ENCODE measurements at regions of chr20 and their contacts with region 1.

Region 1: DNA sequence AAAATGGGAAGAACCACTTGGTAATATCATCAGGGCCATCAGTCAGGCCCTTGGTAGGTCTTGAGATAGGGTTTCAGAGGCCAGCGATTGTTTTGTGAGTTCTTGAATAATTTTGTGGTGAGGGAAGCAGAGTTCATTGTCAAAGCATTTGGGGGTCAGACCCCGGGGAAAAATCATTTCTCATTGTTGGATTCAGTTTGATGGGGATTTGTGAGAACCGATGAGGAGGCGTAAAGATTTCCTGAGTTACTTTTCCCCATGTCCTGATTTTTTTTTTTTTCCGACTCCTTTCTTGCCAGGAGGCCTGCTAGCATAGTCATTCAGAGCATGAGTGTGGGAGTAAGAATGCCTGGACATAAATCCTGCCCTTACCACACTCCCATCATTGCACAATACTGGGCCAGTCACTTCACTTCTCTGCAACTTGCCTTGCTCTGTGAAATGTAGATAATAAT is 60.3 kb downstream of the TSHZ2 start:
- DNase-seq: peak in 1 of 2 donors; percentile 78
- H3K4me3 ChIP-seq: peak overlapping the region in 1 of 3 donors; percentile 5
- H3K27ac ChIP-seq: peak overlapping the region; percentile 81 to 88
- H3K4me1 ChIP-seq: peaks cover 0 to 7% of the 10 kb centered on the region in 2 donors
- H3K27me3 ChIP-seq: no peaks in the 10 kb centered on the region
- CTCF ChIP-seq: no peak
- POLR2A ChIP-seq: no peak

Region 2: DNA sequence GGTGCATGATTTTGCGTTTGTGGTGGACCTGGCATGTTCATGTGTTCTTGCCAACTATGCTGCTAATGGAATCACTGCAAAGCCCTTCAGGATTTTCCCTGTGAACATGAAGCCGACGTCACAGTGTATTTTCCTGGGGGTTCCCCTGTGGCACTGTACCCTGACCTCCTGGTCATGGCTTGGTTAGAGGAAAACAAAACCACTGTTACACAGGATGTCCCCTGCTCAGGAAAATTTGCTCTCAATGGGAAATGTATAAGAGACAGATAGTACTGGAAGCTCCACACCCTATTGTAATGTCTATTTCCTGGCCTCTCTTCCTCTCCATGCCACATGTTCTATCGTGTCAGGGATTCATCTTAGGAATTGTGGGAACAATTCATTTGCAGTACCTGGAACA is 40.7 kb before region 1 on chr20:
- intact Hi-C with region 1: loop called (anchors 2 kb)
- DNase-seq: no peak
- H3K4me3 ChIP-seq: no peak overlapping the region
- H3K27ac ChIP-seq: peak overlapping the region; percentile 59 to 80
- H3K4me1 ChIP-seq: peaks cover 3 to 18% of the 10 kb centered on the region in 2 donors
- H3K27me3 ChIP-seq: no peaks in the 10 kb centered on the region
- CTCF ChIP-seq: no peak
- POLR2A ChIP-seq: no peak

Region 3: GRCh38 chr20:52998268-52998667 is 34.2 kb before region 1 on chr20:
- intact Hi-C with region 1: loop called (anchors 2 kb)
- DNase-seq: no peak
- H3K4me3 ChIP-seq: no peak overlapping the region
- H3K27ac ChIP-seq: peak overlapping the region; percentile 32 to 90
- H3K4me1 ChIP-seq: peaks cover 3 to 20% of the 10 kb centered on the region in 2 donors
- H3K27me3 ChIP-seq: no peaks in the 10 kb centered on the region
- CTCF ChIP-seq: no peak
- POLR2A ChIP-seq: no peak